ENCODE measurements at regions of chr7 and their contacts with region 1.

Region 1: GRCh38 chr7:30284298-30285066 is at the start of gene ZNRF2:
- DNase-seq: peak; percentile 99 to 100
- H3K4me3 ChIP-seq: peak within 1 kb of the TSS; percentile 77 to 84
- H3K27ac ChIP-seq: peak within 1 kb of the TSS; percentile 99
- H3K4me1 ChIP-seq: peaks cover 0 to 14% of the 10 kb centered on the region in 2 donors
- H3K27me3 ChIP-seq: no peaks in the 10 kb centered on the region
- CTCF ChIP-seq: peak; percentile 15 to 66 (median 57)
- total RNA-seq, gene ZNRF2: 31.7 TPM

Region 2: DNA sequence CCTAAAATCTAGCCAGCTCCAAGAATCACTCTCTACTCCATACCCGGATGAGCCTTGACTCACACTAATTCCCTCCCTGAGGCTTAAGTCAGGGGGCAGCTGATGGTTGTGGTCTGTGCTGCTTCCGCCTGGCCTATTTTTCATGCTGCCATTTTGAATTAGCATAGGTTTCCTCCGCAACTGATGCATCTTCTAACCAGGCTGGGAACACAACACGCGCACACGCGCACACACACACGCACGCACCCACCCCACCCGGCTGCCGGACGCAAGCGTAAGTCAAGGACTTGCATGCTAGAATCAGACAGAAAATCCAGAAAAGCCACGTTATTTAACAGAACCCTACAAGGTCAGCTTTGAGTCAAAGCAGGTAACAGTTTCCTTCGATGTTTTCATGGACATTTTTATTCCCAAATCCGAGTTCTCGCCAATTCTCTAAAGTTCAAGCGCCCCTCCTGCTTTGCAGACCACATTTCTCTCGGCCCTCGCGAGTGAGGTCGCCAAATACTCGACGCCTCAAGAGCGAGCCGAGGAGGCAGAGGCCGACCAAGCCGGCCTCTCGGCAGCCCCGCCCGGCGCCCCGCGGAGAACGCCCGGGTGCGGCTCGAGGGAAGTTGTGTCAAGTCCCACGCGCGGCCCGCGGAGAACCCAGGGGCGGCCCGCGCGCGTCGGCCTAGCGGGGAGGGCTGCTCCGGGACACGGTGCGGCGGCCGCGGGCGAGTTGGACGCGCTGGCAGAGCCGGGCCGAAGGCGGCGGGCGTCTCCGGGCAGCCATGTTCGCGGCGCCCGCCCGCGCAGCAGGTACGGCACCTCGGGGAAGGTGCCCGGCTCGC is 295.8 kb before region 1 on chr7:
- intact Hi-C with region 1: loop called (anchors 10 kb)
- DNase-seq: peak in 1 of 2 donors; percentile 68
- H3K4me3 ChIP-seq: peak overlapping the region; percentile 94 to 97
- H3K27ac ChIP-seq: peak overlapping the region; percentile 97
- H3K4me1 ChIP-seq: peaks cover 0 to 9% of the 10 kb centered on the region in 2 donors
- H3K27me3 ChIP-seq: no peaks in the 10 kb centered on the region
- CTCF ChIP-seq: no peak

Region 3: GRCh38 chr7:30142710-30143109 is 141.8 kb before region 1 on chr7:
- intact Hi-C with region 1: loop called (anchors 2 kb)
- DNase-seq: peak in 1 of 2 donors; percentile 90
- H3K4me3 ChIP-seq: peak overlapping the region in 1 of 2 donors; percentile 29
- H3K27ac ChIP-seq: peak overlapping the region; percentile 51 to 74
- H3K4me1 ChIP-seq: peaks cover 12 to 39% of the 10 kb centered on the region in 2 donors
- H3K27me3 ChIP-seq: no peaks in the 10 kb centered on the region
- CTCF ChIP-seq: no peak

Region 4: GRCh38 chr7:30478349-30479201 is 194.1 kb after region 1 on chr7 and contains the start of gene NOD1:
- intact Hi-C with region 1: loop called (anchors 1 kb)
- DNase-seq: peak in 1 of 2 donors; percentile 85
- H3K4me3 ChIP-seq: peak within 1 kb of the TSS; percentile 76 to 93
- H3K27ac ChIP-seq: peak within 1 kb of the TSS; percentile 84 to 90
- H3K4me1 ChIP-seq: peaks cover 0 to 23% of the 10 kb centered on the region in 2 donors
- H3K27me3 ChIP-seq: no peaks in the 10 kb centered on the region
- CTCF ChIP-seq: no peak
- total RNA-seq, gene NOD1: 20.0 TPM

Measured in ascending aorta (tissue), 2 donors.